K562 (cell line): ENCODE measurements at regions of chr2 and their contacts with region 1.

Region 1: GRCh38 chr2:34096562-34097171 is 497.6 kb upstream of the FAM98A start:
- DNase-seq: peak; percentile 14 to 54 (median 34)
- ATAC-seq: peak; percentile 63
- H3K4me3 ChIP-seq: no peak overlapping the region
- H3K27ac ChIP-seq: no peak overlapping the region
- H3K4me1 ChIP-seq: no peaks in the 10 kb centered on the region
- H3K27me3 ChIP-seq: no peaks in the 10 kb centered on the region
- CTCF ChIP-seq: peak in 2 of 3 experiments; percentile 62; a peak in 5 of 6 replicates
- EP300 ChIP-seq: no peak
- POLR2A ChIP-seq: no peak
- RAD21 ChIP-seq: peak; percentile 43 to 74

Region 2: GRCh38 chr2:33835911-33836310 is 260.8 kb before region 1 on chr2:
- CTCF ChIA-PET with region 1: no interaction called
- POLR2A ChIA-PET with region 1: no interaction called
- in situ Hi-C with region 1: no loop called
- intact Hi-C with region 1: no loop called
- DNase-seq: no peak
- ATAC-seq: no peak
- H3K4me3 ChIP-seq: no peak overlapping the region
- H3K27ac ChIP-seq: no peak overlapping the region
- H3K4me1 ChIP-seq: no peaks in the 10 kb centered on the region
- H3K27me3 ChIP-seq: no peaks in the 10 kb centered on the region
- CTCF ChIP-seq: no peak
- EP300 ChIP-seq: no peak
- POLR2A ChIP-seq: no peak
- RAD21 ChIP-seq: no peak

Region 3: GRCh38 chr2:35410431-35411061 is 1313.9 kb after region 1 on chr2:
- CTCF ChIA-PET with region 1: interaction called, 3 read pairs
- POLR2A ChIA-PET with region 1: no interaction called
- in situ Hi-C with region 1: no loop called
- intact Hi-C with region 1: loop called (anchors 10 kb)
- DNase-seq: peak; percentile 28 to 47 (median 44)
- ATAC-seq: no peak
- H3K4me3 ChIP-seq: no peak overlapping the region
- H3K27ac ChIP-seq: no peak overlapping the region
- H3K4me1 ChIP-seq: no peaks in the 10 kb centered on the region
- H3K27me3 ChIP-seq: no peaks in the 10 kb centered on the region
- CTCF ChIP-seq: peak; percentile 40 to 74 (median 55); a peak in 5 of 6 replicates
- EP300 ChIP-seq: no peak
- POLR2A ChIP-seq: no peak
- RAD21 ChIP-seq: peak; percentile 31 to 41; a peak in 3 of 4 replicates